ENCODE measurements at regions of chr7 and their contacts with region 1.

Region 1: DNA sequence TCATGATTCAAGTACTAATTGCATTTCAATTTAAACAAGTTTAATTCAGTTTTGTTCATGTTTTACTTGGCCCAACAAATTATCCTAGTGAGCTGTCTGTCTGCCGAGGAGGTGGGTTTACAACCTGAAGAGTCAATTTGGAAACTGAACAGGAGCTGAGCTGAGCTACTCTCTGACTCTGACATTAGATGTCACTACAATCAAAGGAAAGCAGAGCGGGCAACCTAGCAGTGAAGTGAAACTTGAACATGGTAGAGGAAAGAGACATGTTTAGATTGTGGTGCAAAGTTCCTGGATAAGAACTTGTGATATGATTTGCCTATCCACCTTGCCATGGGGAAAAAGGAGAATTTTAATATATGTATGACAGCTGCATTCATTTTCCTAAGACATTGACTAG is 9.6 kb upstream of the AGR3 start:
- DNase-seq: peak; percentile 74
- H3K4me3 Mint-ChIP-seq: no peak overlapping the region
- H3K27ac Mint-ChIP-seq: no peak overlapping the region
- H3K4me1 Mint-ChIP-seq: peaks cover 5% of the 10 kb centered on the region
- H3K27me3 Mint-ChIP-seq: no peaks in the 10 kb centered on the region
- CTCF ChIP-seq: peak; percentile 68

Region 2: GRCh38 chr7:16695621-16696237 is 195.6 kb before region 1 on chr7:
- CTCF ChIA-PET with region 1: interaction called, 20 read pairs
- POLR2A ChIA-PET with region 1: no interaction called
- intact Hi-C with region 1: no loop called
- DNase-seq: peak; percentile 65
- H3K4me3 Mint-ChIP-seq: no peak overlapping the region
- H3K27ac Mint-ChIP-seq: no peak overlapping the region
- H3K4me1 Mint-ChIP-seq: no peaks in the 10 kb centered on the region
- H3K27me3 Mint-ChIP-seq: no peaks in the 10 kb centered on the region
- CTCF ChIP-seq: peak; percentile 50

Region 3: DNA sequence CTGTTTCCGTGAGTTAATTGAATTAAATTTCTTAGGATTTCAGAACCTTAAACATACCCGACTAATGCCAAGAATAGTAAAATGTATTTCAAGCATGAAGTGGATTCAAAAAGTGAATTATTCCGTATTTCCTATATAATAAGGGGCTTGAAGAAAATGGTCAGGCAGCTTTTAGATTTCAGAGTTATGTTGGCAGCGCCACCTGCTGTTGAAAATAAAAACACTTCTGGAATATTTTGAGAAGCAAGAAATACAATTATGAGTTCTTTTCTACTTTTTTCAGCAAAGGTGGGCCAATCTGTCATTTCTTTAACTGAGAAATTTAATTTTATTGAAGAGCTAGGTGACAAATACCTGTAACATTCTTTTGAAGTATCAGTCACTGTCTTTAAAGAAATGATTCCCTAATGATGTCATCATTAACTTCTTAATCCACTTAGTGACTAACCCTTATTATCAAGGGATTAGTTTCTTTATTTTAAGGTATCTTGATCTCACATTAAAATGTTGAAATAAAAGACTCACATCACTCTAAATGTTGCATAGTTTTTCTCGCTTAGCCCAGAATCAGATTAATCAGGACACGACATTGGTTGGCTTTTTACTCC is 27.1 kb after region 1 on chr7:
- CTCF ChIA-PET with region 1: interaction called, 76 read pairs
- POLR2A ChIA-PET with region 1: interaction called, 10 read pairs
- intact Hi-C with region 1: loop called (anchors 1 kb)
- DNase-seq: peak; percentile 47
- H3K4me3 Mint-ChIP-seq: no peak overlapping the region
- H3K27ac Mint-ChIP-seq: no peak overlapping the region
- H3K4me1 Mint-ChIP-seq: peaks cover 48% of the 10 kb centered on the region
- H3K27me3 Mint-ChIP-seq: no peaks in the 10 kb centered on the region
- CTCF ChIP-seq: peak; percentile 69